ENCODE measurements at regions of chr22 and their contacts with region 1.

Region 1: GRCh38 chr22:32796865-32797573 is 4.5 kb upstream of the TIMP3 start:
- DNase-seq: peak; percentile 33 to 41
- ATAC-seq: peak; percentile 28 to 55
- H3K4me3 ChIP-seq: no peak overlapping the region
- H3K27ac ChIP-seq: peak overlapping the region in 2 of 4 donors; percentile 31 to 37
- H3K4me1 ChIP-seq: no peaks in the 10 kb centered on the region
- H3K27me3 ChIP-seq: peaks cover 2 to 8% (median 8%) of the 10 kb centered on the region in 3 donors
- CTCF ChIP-seq: peak; percentile 37 to 74 (median 68)
- POLR2A ChIP-seq: no peak

Region 2: GRCh38 chr22:32528984-32529982 is 267.7 kb before region 1 on chr22:
- in situ Hi-C with region 1: loop called (anchors 5 to 25 kb)
- intact Hi-C with region 1: loop called (anchors 2 kb)
- DNase-seq: peak; percentile 68 to 77
- ATAC-seq: peak; percentile 60 to 62
- H3K4me3 ChIP-seq: peak overlapping the region in 1 of 4 donors; percentile 35
- H3K27ac ChIP-seq: peak overlapping the region; percentile 71 to 87 (median 78)
- H3K4me1 ChIP-seq: peaks cover 17 to 33% of the 10 kb centered on the region in 2 donors
- H3K27me3 ChIP-seq: no peaks in the 10 kb centered on the region
- CTCF ChIP-seq: peak; percentile 59 to 89 (median 85)
- POLR2A ChIP-seq: no peak

Region 3: DNA sequence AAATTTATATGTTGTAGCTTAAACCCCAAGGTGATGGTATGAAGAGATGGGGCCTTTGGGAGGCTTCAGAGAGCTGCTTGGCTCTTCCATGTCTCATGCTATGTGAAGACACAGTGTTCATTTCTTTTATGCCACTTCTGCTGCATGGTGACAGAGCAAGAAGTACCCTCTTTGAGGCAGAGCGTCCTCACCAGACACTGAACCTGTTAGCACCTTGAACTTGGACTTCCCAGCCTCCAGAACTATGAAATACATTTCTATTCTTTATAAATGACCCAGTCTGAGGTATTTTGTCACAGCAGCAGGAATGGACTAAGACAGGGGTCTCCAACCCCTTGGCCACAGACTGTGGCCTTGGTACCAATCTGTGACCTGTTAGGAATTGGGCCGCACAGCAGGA is 142.0 kb before region 1 on chr22:
- in situ Hi-C with region 1: loop called in 2 of 4 experiments (anchors 5 kb)
- intact Hi-C with region 1: loop called (anchors 2 kb)
- DNase-seq: no peak
- ATAC-seq: no peak
- H3K4me3 ChIP-seq: no peak overlapping the region
- H3K27ac ChIP-seq: no peak overlapping the region
- H3K4me1 ChIP-seq: no peaks in the 10 kb centered on the region
- H3K27me3 ChIP-seq: peaks cover 0 to 2% (median 0%) of the 10 kb centered on the region in 3 donors
- CTCF ChIP-seq: no peak
- POLR2A ChIP-seq: no peak

Region 4: GRCh38 chr22:32660292-32660691 is 136.7 kb before region 1 on chr22:
- in situ Hi-C with region 1: loop called in 2 of 4 experiments (anchors 5 kb)
- intact Hi-C with region 1: loop called (anchors 2 kb)
- DNase-seq: peak; percentile 13 to 52
- ATAC-seq: peak in 1 of 2 donors; percentile 58
- H3K4me3 ChIP-seq: no peak overlapping the region
- H3K27ac ChIP-seq: no peak overlapping the region
- H3K4me1 ChIP-seq: no peaks in the 10 kb centered on the region
- H3K27me3 ChIP-seq: peaks cover 0 to 2% (median 0%) of the 10 kb centered on the region in 3 donors
- CTCF ChIP-seq: peak; percentile 42 to 60 (median 58)
- POLR2A ChIP-seq: no peak

Region 5: GRCh38 chr22:32775957-32776356 is 21.1 kb before region 1 on chr22:
- in situ Hi-C with region 1: no loop called
- intact Hi-C with region 1: no loop called
- DNase-seq: no peak
- ATAC-seq: no peak
- H3K4me3 ChIP-seq: no peak overlapping the region
- H3K27ac ChIP-seq: no peak overlapping the region
- H3K4me1 ChIP-seq: no peaks in the 10 kb centered on the region
- H3K27me3 ChIP-seq: no peaks in the 10 kb centered on the region
- CTCF ChIP-seq: peak in 2 of 5 experiments; percentile 16 to 17
- POLR2A ChIP-seq: no peak

Region 6: DNA sequence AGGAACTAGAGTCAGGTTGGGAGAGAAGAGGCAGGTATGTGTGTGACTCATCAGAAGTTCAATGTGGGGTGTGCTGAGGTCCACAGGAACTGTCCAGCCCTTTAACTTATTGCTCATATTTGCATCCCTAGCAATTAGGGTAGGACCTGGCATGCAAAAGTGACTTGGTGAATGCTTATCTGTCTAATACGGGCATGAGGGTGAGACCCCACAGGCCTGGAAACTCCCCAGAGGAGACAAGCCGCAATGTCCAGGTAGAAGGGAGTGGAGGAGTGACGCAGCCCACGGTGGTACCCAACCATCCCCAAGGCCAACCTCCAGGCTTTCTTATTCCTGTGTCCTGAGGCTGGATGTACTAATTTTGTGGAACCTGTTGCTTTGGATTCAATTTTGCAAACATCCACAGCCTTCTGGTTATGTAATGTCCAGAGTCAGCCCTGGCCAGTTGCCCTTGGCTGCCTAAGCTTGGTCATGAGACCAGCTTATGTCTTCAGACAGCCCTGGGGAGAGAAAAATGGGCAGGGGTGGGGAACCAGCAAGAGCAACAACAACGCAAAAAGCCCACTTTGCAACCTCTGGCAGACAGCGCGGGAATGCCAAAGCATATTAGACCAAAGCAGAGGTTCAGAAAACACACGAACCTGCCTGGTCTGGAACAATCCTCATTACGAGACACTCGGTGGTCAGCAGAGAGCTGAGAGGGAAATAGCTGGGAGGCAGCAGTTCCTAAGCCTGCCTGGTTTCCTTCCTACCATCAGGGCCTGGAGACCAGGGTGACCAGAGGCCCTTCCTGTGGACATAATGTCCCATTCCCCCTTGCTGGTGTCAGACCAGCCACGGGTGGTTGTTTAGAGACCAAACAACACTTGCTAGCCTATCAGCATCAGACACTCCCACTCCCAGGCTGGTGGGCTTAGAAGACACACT is 53.8 kb after region 1 on chr22:
- in situ Hi-C with region 1: no loop called
- intact Hi-C with region 1: loop called (anchors 5 kb)
- DNase-seq: peak; percentile 69 to 78
- ATAC-seq: peak; percentile 55 to 59
- H3K4me3 ChIP-seq: no peak overlapping the region
- H3K27ac ChIP-seq: peak overlapping the region; percentile 62 to 79 (median 72)
- H3K4me1 ChIP-seq: peaks cover 54 to 85% of the 10 kb centered on the region in 2 donors
- H3K27me3 ChIP-seq: peaks cover 0 to 2% (median 0%) of the 10 kb centered on the region in 3 donors
- CTCF ChIP-seq: no peak
- POLR2A ChIP-seq: no peak

Region 7: DNA sequence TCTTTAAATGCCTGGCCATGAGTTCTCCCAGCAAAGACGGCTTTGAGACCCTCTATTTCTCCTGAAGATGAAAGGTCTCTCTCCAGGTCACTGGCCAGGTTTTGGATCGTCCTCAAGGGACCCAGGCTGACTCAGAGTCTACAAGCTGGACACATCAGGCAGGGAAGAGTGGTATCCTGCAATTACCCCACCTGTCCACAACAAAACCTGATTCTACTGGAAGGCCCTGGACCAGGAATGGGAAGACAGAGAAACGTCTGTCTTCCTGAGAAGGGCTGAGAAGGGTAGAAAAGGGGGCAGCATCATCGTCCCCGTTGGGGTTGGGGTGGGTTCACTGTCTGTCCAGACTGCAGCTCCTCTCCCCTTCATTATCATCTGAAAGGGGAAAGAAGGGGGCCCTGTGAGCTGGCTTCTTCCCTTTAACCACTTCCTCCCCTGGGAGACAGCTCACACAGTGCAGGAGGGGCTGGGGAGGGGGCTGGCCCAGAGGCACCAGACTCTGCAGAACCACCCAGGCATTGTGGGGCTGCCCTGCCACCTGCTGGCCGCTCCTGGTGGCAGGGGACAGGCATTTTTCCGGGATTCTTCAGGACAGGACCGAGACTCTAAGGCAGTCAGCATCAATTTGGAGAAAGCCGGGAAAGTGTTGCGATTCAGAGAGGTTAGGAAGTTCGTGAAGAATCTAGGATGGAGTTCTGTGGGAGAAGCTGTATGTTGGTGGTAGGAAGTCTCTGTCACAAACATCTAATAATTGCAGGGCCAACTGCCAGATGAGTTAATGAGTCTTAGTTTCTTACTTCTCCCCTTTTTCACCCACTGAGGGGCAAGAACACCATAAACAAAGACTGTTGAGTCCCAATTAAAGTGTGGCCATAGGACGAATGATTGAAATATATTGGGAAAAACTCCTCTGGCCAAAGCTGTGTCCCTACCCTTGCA is 203.6 kb after region 1 on chr22:
- in situ Hi-C with region 1: no loop called
- intact Hi-C with region 1: loop called (anchors 5 kb)
- DNase-seq: peak in 1 of 2 donors; percentile 25
- ATAC-seq: no peak
- H3K4me3 ChIP-seq: no peak overlapping the region
- H3K27ac ChIP-seq: no peak overlapping the region
- H3K4me1 ChIP-seq: peaks cover 6 to 11% of the 10 kb centered on the region in 2 donors
- H3K27me3 ChIP-seq: no peaks in the 10 kb centered on the region
- CTCF ChIP-seq: peak; percentile 58 to 85 (median 78)
- POLR2A ChIP-seq: no peak